Dendritic cell treated with granulocyte-macrophage colony-stimulating factor and Interleukin-4, amounts not matched to agents 40 ng/mL and 50 ng/mL, for 4 days (primary cell): ENCODE measurements at regions of chr15 and their contacts with region 1.

Region 1: DNA sequence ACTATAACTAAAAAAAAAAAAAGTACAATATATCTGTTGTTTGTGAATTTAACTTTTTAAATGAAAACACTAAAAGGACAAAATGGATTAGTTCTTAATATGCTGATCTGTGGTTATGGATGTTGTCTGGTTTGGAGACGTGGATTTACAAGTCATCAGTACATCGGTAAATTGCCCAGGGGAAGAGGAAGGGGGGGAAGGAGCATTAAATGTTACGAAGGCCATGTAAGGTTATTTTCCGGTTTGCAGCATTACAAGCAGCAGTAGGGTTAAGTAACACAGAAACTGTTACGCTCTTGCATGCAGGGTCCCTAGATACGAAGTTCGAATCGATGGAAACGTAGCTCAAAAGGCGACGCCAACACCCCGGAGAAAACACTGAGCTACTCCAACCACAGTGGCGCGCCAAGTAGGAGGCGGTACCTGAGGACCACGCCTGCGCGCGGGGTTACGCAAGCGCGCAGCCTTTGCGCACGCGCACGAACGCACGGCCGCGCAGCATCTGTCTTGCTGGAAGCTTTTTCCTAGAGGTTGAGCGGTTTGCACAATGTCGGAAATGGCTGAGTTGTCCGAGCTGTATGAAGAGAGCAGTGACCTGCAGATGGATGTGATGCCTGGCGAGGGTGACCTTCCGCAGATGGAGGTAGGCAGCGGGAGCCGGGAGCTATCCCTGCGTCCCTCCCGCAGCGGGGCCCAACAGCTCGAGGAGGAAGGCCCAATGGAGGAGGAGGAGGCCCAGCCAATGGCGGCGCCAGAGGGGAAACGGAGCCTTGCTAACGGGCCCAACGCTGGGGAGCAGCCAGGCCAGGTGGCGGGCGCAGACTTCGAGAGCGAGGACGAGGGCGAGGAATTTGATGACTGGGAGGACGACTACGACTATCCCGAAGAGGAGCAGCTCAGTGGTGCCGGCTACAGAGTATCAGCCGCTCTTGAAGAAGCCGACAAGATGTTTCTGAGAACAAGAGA is at the start of gene EID1:
- H3K4me3 Mint-ChIP-seq: peak within 1 kb of the TSS; percentile 98
- H3K27ac Mint-ChIP-seq: peak within 1 kb of the TSS; percentile 92
- H3K4me1 Mint-ChIP-seq: peaks cover 23% of the 10 kb centered on the region
- H3K27me3 Mint-ChIP-seq: peaks cover 3% of the 10 kb centered on the region

Region 2: GRCh38 chr15:48507416-48508065 is 370.4 kb before region 1 on chr15:
- intact Hi-C with region 1: no loop called
- H3K4me3 Mint-ChIP-seq: no peak overlapping the region
- H3K27ac Mint-ChIP-seq: no peak overlapping the region
- H3K4me1 Mint-ChIP-seq: no peaks in the 10 kb centered on the region
- H3K27me3 Mint-ChIP-seq: no peaks in the 10 kb centered on the region

Region 3: DNA sequence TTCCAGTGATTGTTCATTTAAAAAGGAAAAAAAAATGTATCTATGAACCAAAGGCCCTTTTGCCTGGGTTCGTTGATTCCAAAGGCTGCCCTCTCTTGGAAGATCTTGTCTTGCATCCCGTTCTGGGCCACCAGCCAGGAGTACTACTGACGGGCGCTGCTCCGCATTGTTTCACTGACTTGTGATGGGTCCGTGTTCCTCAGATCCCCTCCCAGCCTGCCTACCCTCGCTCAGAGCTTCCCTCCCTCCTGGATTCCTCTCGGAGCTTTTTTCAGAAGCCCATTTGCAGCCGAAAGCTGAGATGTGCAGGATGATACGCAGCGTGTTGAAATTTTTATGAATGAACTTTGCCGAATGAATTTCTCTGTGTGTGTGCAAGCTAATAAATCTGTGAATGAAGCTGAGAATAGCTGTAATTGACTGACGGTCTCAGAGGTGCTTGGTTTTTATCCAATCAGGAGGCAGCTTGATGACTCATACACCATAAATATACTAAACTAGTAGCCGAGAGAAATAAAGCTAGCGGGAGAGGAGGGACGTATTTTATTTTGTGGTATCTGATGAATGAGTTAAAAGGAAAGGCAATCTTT is 85.7 kb after region 1 on chr15 and contains the start of gene SHC4:
- intact Hi-C with region 1: loop called (anchors 10 kb)
- H3K4me3 Mint-ChIP-seq: peak within 1 kb of the TSS; percentile 67
- H3K27ac Mint-ChIP-seq: no peak within 1 kb of the TSS
- H3K4me1 Mint-ChIP-seq: peaks cover 23% of the 10 kb centered on the region
- H3K27me3 Mint-ChIP-seq: peaks cover 47% of the 10 kb centered on the region